CD8-positive, alpha-beta T cell (primary cell): ENCODE measurements at regions of chr13 and their contacts with region 1.

Region 1: GRCh38 chr13:40069173-40070044 is 413.9 kb downstream of the COG6 start:
- DNase-seq: peak; percentile 47 to 86 (median 77)
- ATAC-seq: peak; percentile 96
- H3K4me3 ChIP-seq: no peak overlapping the region
- H3K4me3 Mint-ChIP-seq: peak overlapping the region; percentile 59
- H3K27ac ChIP-seq: no peak overlapping the region
- H3K27ac Mint-ChIP-seq: peak overlapping the region; percentile 53
- H3K4me1 ChIP-seq: peaks cover 20% of the 10 kb centered on the region
- H3K4me1 Mint-ChIP-seq: peaks cover 29% of the 10 kb centered on the region
- H3K27me3 ChIP-seq: no peaks in the 10 kb centered on the region
- H3K27me3 Mint-ChIP-seq: no peaks in the 10 kb centered on the region
- CTCF ChIP-seq: peak; percentile 90

Region 2: DNA sequence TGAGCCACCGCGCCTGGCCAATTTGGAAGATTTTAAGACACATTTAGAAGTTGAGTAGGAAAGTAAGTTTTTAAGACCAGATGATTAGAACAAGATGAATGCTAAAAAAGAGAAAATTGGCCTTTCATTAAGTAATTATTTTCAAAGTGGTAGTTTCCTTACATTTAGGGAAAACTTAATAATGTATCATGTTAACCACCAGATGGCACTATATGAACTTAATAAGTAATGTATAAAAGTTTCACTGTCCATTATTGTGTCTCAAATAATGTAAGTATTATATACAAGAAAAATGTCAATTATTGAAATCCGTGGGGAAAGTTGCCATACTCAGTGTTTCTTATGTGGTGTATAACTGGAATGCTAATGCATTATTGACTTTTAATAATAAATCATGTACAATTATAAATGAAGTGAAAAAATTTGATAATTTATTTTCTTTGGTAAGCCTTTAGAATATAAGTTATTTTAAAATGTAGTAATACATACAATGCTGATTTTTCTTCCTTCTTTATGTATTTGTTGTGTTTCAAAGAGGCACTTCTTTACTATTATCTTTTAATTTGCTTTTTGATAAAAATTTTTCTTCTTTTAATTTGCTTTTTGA is 384.8 kb before region 1 on chr13:
- CTCF ChIA-PET with region 1: no interaction called
- POLR2A ChIA-PET with region 1: no interaction called
- intact Hi-C with region 1: loop called (anchors 5 kb)
- DNase-seq: peak in 2 of 9 experiments; percentile 29 to 51
- ATAC-seq: peak; percentile 46
- H3K4me3 ChIP-seq: no peak overlapping the region
- H3K4me3 Mint-ChIP-seq: no peak overlapping the region
- H3K27ac ChIP-seq: no peak overlapping the region
- H3K27ac Mint-ChIP-seq: no peak overlapping the region
- H3K4me1 ChIP-seq: no peaks in the 10 kb centered on the region
- H3K4me1 Mint-ChIP-seq: no peaks in the 10 kb centered on the region
- H3K27me3 ChIP-seq: no peaks in the 10 kb centered on the region
- H3K27me3 Mint-ChIP-seq: no peaks in the 10 kb centered on the region
- CTCF ChIP-seq: peak; percentile 59

Region 3: DNA sequence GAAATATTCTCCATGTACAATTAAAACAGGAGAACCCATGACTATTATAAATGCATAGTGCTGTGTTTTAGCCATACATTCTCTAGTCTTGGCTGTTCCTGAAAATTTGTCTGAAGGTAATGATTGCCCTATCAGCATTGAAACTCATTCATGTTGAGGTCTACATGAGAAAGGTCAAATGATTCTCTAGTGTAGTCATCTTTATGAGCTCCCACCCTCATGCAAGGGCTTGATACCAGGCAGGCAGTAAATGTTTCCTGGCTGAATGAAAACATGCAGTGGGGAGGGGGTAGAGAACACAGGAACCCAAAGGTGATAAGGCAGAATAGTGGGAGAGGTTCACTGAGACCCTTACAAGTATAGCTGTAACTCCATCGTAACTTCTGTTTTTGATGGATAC is 10.3 kb after region 1 on chr13:
- CTCF ChIA-PET with region 1: interaction called, 21 read pairs
- POLR2A ChIA-PET with region 1: no interaction called
- intact Hi-C with region 1: no loop called
- DNase-seq: no peak
- ATAC-seq: no peak
- H3K4me3 ChIP-seq: no peak overlapping the region
- H3K4me3 Mint-ChIP-seq: no peak overlapping the region
- H3K27ac ChIP-seq: no peak overlapping the region
- H3K27ac Mint-ChIP-seq: no peak overlapping the region
- H3K4me1 ChIP-seq: peaks cover 15% of the 10 kb centered on the region
- H3K4me1 Mint-ChIP-seq: peaks cover 17% of the 10 kb centered on the region
- H3K27me3 ChIP-seq: no peaks in the 10 kb centered on the region
- H3K27me3 Mint-ChIP-seq: no peaks in the 10 kb centered on the region
- CTCF ChIP-seq: no peak

Region 4: GRCh38 chr13:40190641-40191100 is 121.3 kb after region 1 on chr13:
- CTCF ChIA-PET with region 1: interaction called, 35 read pairs
- POLR2A ChIA-PET with region 1: interaction called, 11 read pairs
- intact Hi-C with region 1: loop called in 1 of 2 experiments (anchors 1 kb)
- DNase-seq: peak; percentile 36 to 85 (median 75)
- ATAC-seq: peak; percentile 36
- H3K4me3 ChIP-seq: no peak overlapping the region
- H3K4me3 Mint-ChIP-seq: peak overlapping the region; percentile 66
- H3K27ac ChIP-seq: peak overlapping the region; percentile 50 to 58
- H3K27ac Mint-ChIP-seq: peak overlapping the region; percentile 90
- H3K4me1 ChIP-seq: peaks cover 65% of the 10 kb centered on the region
- H3K4me1 Mint-ChIP-seq: peaks cover 83% of the 10 kb centered on the region
- H3K27me3 ChIP-seq: no peaks in the 10 kb centered on the region
- H3K27me3 Mint-ChIP-seq: no peaks in the 10 kb centered on the region
- CTCF ChIP-seq: no peak

Region 5: GRCh38 chr13:40388617-40389016 is 319.2 kb after region 1 on chr13:
- CTCF ChIA-PET with region 1: interaction called, 5 read pairs
- POLR2A ChIA-PET with region 1: no interaction called
- intact Hi-C with region 1: loop called in 1 of 2 experiments (anchors 2 kb)
- DNase-seq: peak; percentile 65 to 95 (median 85)
- ATAC-seq: peak; percentile 90
- H3K4me3 ChIP-seq: peak overlapping the region; percentile 48 to 53
- H3K4me3 Mint-ChIP-seq: peak overlapping the region; percentile 88
- H3K27ac ChIP-seq: peak overlapping the region; percentile 91 to 99
- H3K27ac Mint-ChIP-seq: peak overlapping the region; percentile 98
- H3K4me1 ChIP-seq: peaks cover 29% of the 10 kb centered on the region
- H3K4me1 Mint-ChIP-seq: peaks cover 73% of the 10 kb centered on the region
- H3K27me3 ChIP-seq: no peaks in the 10 kb centered on the region
- H3K27me3 Mint-ChIP-seq: no peaks in the 10 kb centered on the region
- CTCF ChIP-seq: no peak

Region 6: GRCh38 chr13:40485611-40486517 is 416.5 kb after region 1 on chr13:
- CTCF ChIA-PET with region 1: interaction called, 7 read pairs
- POLR2A ChIA-PET with region 1: no interaction called
- intact Hi-C with region 1: loop called in 1 of 2 experiments (anchors 1 kb)
- DNase-seq: peak; percentile 49 to 94 (median 73)
- ATAC-seq: peak; percentile 92
- H3K4me3 ChIP-seq: peak overlapping the region in 1 of 2 experiments; percentile 33
- H3K4me3 Mint-ChIP-seq: peak overlapping the region; percentile 43
- H3K27ac ChIP-seq: peak overlapping the region; percentile 53 to 61
- H3K27ac Mint-ChIP-seq: peak overlapping the region; percentile 93
- H3K4me1 ChIP-seq: peaks cover 92% of the 10 kb centered on the region
- H3K4me1 Mint-ChIP-seq: peaks cover 91% of the 10 kb centered on the region
- H3K27me3 ChIP-seq: no peaks in the 10 kb centered on the region
- H3K27me3 Mint-ChIP-seq: no peaks in the 10 kb centered on the region
- CTCF ChIP-seq: no peak

Region 7: GRCh38 chr13:40682449-40683240 is 613.2 kb after region 1 on chr13:
- CTCF ChIA-PET with region 1: interaction called, 77 read pairs
- POLR2A ChIA-PET with region 1: no interaction called
- intact Hi-C with region 1: loop called (anchors 1 kb)
- DNase-seq: peak in 2 of 9 experiments; percentile 27 to 51
- ATAC-seq: peak; percentile 48
- H3K4me3 ChIP-seq: no peak overlapping the region
- H3K4me3 Mint-ChIP-seq: no peak overlapping the region
- H3K27ac ChIP-seq: no peak overlapping the region
- H3K27ac Mint-ChIP-seq: peak overlapping the region; percentile 6
- H3K4me1 ChIP-seq: peaks cover 6% of the 10 kb centered on the region
- H3K4me1 Mint-ChIP-seq: peaks cover 9% of the 10 kb centered on the region
- H3K27me3 ChIP-seq: no peaks in the 10 kb centered on the region
- H3K27me3 Mint-ChIP-seq: no peaks in the 10 kb centered on the region
- CTCF ChIP-seq: peak; percentile 87